OCI-LY7 (cell line): ENCODE measurements at regions of chr1 and their contacts with region 1.

Region 1: GRCh38 chr1:16440470-16441281 is at the start of gene NECAP2:
- DNase-seq: peak; percentile 96
- H3K4me3 ChIP-seq: peak within 1 kb of the TSS; percentile 94
- H3K27ac ChIP-seq: peak within 1 kb of the TSS; percentile 59
- H3K4me1 ChIP-seq: peaks cover 27% of the 10 kb centered on the region
- CTCF ChIP-seq: peak; percentile 81
- total RNA-seq, gene NECAP2: 59.0 and 69.2 TPM in 2 replicates

Region 2: GRCh38 chr1:16409536-16410152 is 31.0 kb before region 1 on chr1:
- CTCF ChIA-PET with region 1: no interaction called
- POLR2A ChIA-PET with region 1: no interaction called
- intact Hi-C with region 1: no loop called
- DNase-seq: no peak
- H3K4me3 ChIP-seq: no peak overlapping the region
- H3K27ac ChIP-seq: no peak overlapping the region
- H3K4me1 ChIP-seq: no peaks in the 10 kb centered on the region
- CTCF ChIP-seq: no peak

Region 3: GRCh38 chr1:16498573-16499413 is 58.1 kb after region 1 on chr1:
- CTCF ChIA-PET with region 1: no interaction called
- POLR2A ChIA-PET with region 1: interaction called, 4 read pairs
- intact Hi-C with region 1: loop called (anchors 5 kb)
- DNase-seq: peak; percentile 89
- H3K4me3 ChIP-seq: peak overlapping the region; percentile 79
- H3K27ac ChIP-seq: no peak overlapping the region
- H3K4me1 ChIP-seq: peaks cover 11% of the 10 kb centered on the region
- CTCF ChIP-seq: peak; percentile 34; the same call in 1 of the 2 replicates